Vagina (tissue), 2 donors: ENCODE measurements at regions of chr3 and their contacts with region 1.

Region 1: DNA sequence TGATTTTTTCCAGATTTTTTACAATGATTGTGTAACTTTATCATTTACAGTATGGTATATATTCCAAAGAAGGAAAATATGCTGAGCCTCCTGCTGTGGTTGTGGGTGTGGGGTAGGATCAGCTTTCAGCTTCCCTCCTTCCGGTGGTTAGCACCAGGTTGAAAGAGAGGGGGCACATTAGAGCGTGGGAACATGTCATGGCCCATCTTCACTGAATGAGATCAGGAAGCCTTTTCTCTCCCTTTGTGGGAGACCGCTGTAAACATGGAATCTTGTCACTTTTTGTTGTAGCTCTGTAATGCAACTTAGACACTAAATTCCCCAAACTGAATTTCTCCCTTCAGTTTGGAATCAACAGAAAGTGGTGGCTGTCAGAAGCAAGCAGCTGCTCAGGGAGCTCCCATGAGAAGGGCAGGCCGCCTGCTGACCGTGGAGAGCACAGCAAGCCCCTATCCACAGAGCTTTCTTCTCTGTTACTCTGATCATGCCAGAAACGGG is 86.7 kb upstream of the LIMD1 start:
- DNase-seq: no peak
- H3K4me3 ChIP-seq: no peak overlapping the region
- H3K27ac ChIP-seq: peak overlapping the region; percentile 32
- H3K4me1 ChIP-seq: peaks cover 22% of the 10 kb centered on the region
- H3K27me3 ChIP-seq: no peaks in the 10 kb centered on the region
- CTCF ChIP-seq: peak in 1 of 3 experiments; percentile 13
- POLR2A ChIP-seq: no peak

Region 2: DNA sequence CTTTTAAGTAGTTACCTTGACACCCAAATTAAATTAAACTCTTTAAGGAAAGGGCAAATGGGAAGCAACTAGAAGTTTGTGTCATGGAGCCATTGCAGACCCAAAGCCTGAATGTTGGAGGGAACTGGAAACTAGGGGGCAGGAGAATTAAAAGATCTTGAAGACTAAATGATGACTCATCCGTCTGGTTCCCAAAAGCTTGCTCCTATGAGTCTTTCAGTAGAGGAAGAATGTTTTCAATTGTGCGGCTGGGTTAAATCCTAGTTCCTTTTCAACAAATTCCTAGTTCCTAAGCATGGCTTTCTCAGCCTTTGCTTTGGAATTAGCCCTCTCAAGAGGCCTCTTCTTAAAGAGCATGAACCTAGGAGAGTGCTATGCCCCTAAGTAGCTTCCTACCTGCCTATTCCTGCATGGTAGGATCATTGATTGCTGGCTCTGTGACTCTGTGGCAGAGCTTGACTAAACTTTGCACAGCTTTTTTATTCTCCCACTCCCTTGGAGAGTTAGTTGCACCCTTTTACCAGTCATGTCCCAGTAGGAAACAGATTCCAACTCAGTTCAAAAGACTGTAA is 464.1 kb before region 1 on chr3:
- intact Hi-C with region 1: loop called (anchors 5 kb)
- DNase-seq: no peak
- H3K4me3 ChIP-seq: no peak overlapping the region
- H3K27ac ChIP-seq: no peak overlapping the region
- H3K4me1 ChIP-seq: peaks cover 6% of the 10 kb centered on the region
- H3K27me3 ChIP-seq: no peaks in the 10 kb centered on the region
- CTCF ChIP-seq: peak in 1 of 3 experiments; percentile 33
- POLR2A ChIP-seq: no peak

Region 3: DNA sequence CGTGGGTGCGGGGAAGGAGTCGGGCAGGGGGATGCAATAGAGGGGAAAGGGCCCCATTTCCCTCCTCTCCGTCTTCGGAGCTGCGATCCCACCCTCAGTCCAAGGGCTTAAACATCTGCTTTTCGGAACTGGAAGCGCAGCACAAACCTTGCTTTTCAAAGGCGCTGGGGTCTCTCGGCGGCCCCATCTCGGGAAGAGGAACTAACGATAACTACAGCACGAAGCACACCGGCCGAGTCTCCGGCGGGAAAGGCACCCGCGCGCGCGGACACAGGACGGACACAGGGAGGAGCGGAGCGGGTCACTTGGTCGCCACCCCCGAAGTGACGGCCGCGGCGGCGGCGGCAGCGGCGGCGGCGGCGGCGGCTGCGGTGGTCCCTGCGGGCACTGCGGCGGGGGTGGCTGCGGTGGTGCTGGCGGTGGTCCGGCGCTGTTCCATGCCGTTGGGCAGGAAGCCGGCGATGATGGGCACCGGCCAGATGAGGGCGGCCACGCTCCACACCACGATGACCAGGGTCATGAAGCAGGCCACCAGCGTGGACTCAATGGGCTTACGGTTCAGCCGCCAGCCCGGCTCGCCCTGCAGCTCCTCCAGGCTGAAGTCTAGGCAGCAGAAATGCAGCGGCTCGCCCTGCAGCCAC is 282.9 kb before region 1 on chr3:
- intact Hi-C with region 1: loop called (anchors 10 kb)
- DNase-seq: no peak
- H3K4me3 ChIP-seq: peak overlapping the region; percentile 48 to 74
- H3K27ac ChIP-seq: no peak overlapping the region
- H3K4me1 ChIP-seq: peaks cover 18% of the 10 kb centered on the region
- H3K27me3 ChIP-seq: no peaks in the 10 kb centered on the region
- CTCF ChIP-seq: peak in 1 of 3 experiments; percentile 28
- POLR2A ChIP-seq: no peak